HCT116 (cell line): ENCODE measurements at regions of chr9 and their contacts with region 1.

Region 1: GRCh38 chr9:101486693-101487442 is 46.8 kb upstream of the RNF20 start:
- DNase-seq: peak; percentile 51
- ATAC-seq: peak; percentile 84
- H3K4me3 ChIP-seq: peak overlapping the region; percentile 69 to 82
- H3K27ac ChIP-seq: peak overlapping the region; percentile 92
- H3K4me1 ChIP-seq: peaks cover 10 to 20% of the 10 kb centered on the region in 2 experiments; a peak in 3 of 4 replicates
- H3K27me3 ChIP-seq: no peaks in the 10 kb centered on the region
- CTCF ChIP-seq: peak in 2 of 3 experiments; percentile 36 to 42; a peak in 2 of 6 replicates
- POLR2A ChIP-seq: peak; percentile 32
- RAD21 ChIP-seq: peak; percentile 47; the same call in 1 of the 2 replicates

Region 2: GRCh38 chr9:101465392-101465791 is 21.5 kb before region 1 on chr9:
- CTCF ChIA-PET with region 1: interaction called, 6 read pairs
- POLR2A ChIA-PET with region 1: interaction called, 4 read pairs
- RAD21 ChIA-PET with region 1: no interaction called
- intact Hi-C with region 1: loop called (anchors 2 kb)
- DNase-seq: peak; percentile 83
- ATAC-seq: peak; percentile 99
- H3K4me3 ChIP-seq: no peak overlapping the region
- H3K27ac ChIP-seq: no peak overlapping the region
- H3K4me1 ChIP-seq: peaks cover 16 to 27% of the 10 kb centered on the region in 2 experiments; a peak in 3 of 4 replicates
- H3K27me3 ChIP-seq: no peaks in the 10 kb centered on the region
- CTCF ChIP-seq: peak; percentile 63 to 83 (median 64); a peak in 5 of 6 replicates
- POLR2A ChIP-seq: no peak
- RAD21 ChIP-seq: peak; percentile 67

Region 3: DNA sequence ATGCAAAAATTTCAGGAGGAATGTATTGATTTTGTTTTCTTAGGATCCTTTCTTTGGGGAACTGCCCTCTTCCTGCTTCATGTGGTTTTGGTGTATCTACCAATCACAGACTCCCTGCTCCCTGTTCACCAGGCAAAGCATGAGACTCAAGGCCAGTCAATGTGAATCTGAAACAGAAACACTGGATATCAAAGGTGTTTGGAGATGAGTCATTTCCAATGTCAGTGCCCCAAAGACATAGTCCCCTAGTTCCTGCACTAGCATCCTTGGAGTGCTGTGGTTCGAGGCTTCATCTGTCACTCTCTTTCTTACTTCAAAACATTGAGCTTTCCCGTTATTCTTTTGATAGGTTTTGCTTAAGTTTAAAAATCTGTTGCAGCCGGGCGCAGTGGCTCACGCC is 99.8 kb after region 1 on chr9:
- CTCF ChIA-PET with region 1: no interaction called
- POLR2A ChIA-PET with region 1: no interaction called
- RAD21 ChIA-PET with region 1: no interaction called
- intact Hi-C with region 1: no loop called
- DNase-seq: no peak
- ATAC-seq: peak; percentile 25; the same call in 1 of the 2 replicates
- H3K4me3 ChIP-seq: no peak overlapping the region
- H3K27ac ChIP-seq: no peak overlapping the region
- H3K4me1 ChIP-seq: peaks cover 0 to 12% of the 10 kb centered on the region in 2 experiments; a peak in 2 of 4 replicates
- H3K27me3 ChIP-seq: no peaks in the 10 kb centered on the region
- CTCF ChIP-seq: no peak
- POLR2A ChIP-seq: no peak
- RAD21 ChIP-seq: no peak